ENCODE measurements at regions of chr17 and their contacts with region 1.

Region 1: DNA sequence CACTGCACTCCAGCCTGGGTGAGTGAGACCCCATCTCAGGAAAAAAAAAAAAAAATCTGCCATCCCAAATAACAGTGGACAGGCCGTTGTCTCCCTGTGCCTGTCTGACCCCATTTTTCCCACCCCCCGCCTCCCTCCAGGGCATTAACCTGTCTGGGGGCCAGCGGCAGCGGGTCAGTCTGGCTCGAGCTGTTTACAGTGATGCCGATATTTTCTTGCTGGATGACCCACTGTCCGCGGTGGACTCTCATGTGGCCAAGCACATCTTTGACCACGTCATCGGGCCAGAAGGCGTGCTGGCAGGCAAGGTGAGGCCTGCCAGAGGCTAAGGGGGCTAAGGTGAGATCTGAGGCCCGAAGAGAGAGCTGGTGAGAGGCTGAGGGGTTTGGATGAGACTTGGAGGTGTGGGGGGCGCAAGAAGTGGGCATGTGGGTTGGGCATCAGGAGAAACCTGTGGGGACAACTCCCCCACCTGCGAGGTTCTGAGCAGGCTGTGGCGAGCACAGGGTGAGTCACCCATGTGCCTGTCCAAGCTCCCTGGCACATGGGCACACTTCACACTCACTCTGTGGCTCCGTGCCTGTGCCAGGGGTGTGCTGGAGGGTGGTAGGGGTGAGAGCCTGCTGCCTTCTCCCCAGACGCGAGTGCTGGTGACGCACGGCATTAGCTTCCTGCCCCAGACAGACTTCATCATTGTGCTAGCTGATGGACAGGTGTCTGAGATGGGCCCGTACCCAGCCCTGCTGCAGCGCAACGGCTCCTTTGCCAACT is 34.7 kb downstream of the ANKRD40 start:
- DNase-seq: no peak
- ATAC-seq: no peak
- H3K4me3 Mint-ChIP-seq: no peak overlapping the region
- H3K27ac Mint-ChIP-seq: no peak overlapping the region
- H3K4me1 Mint-ChIP-seq: peaks cover 10% of the 10 kb centered on the region
- H3K27me3 Mint-ChIP-seq: no peaks in the 10 kb centered on the region; the same call in 1 of the 2 replicates
- CTCF ChIP-seq: no peak

Region 2: DNA sequence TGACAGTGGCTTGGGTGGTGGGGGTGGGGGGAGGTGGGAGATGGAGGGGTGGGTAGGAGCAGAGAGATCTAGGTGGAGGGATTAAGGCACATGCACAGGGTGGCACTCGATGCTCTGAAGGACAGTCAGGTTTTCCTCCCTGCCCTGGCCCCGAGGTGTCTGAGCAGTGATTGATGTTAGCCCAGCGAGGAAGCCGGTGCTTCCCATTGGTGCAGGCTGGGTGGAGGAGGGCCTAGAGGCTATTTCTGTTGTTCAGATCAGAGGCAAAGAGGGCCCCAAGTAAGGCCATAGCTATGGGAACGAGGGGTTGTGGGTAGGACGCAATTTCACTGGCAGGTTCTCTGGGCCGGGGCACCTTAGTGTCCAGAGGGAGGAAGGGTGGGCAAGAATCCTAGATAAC is 89.4 kb before region 1 on chr17:
- CTCF ChIA-PET with region 1: no interaction called
- POLR2A ChIA-PET with region 1: interaction called, 10 read pairs
- DNase-seq: no peak
- ATAC-seq: peak; percentile 71
- H3K4me3 Mint-ChIP-seq: no peak overlapping the region
- H3K27ac Mint-ChIP-seq: peak overlapping the region; percentile 27; the same call in 1 of the 2 replicates
- H3K4me1 Mint-ChIP-seq: peaks cover 23% of the 10 kb centered on the region
- H3K27me3 Mint-ChIP-seq: no peaks in the 10 kb centered on the region
- CTCF ChIP-seq: no peak